K562 (cell line): ENCODE measurements at regions of chr3 and their contacts with region 1.

Region 1: DNA sequence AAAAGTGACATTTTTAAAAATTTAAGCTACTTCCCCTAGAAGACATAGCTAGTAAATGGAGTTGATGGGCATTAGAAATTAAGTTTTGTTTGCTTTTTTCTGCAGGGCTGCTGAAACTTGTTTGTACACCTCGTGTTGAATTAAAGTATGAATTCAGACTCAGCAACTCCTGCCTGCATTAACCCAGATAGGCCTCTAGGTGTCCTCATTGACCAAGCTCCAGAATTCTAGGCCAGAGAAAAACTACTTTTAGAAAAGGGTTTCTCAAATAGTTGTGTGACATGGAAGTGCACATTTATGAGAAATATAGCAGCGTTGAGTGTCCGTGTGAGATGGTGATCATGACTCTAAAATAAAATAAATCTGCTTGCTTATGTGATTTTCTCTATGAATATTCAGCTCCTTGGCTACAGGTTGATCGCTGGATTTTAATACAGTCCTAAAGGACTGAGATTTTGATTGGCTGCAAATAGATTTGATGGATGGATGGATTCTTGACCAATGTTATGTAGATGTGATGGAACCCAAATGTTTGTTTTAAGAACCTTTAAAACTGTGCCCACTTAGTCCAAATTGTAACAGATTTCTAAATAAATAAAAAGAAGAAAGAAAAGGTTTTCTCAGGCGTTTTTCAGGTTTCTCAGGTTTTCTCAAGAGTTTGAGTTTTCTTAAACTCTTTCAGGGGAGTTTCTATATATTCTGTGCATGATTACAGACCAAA is 39.4 kb upstream of the LMOD3 start:
- DNase-seq: peak; percentile 36 to 50 (median 42)
- ATAC-seq: peak; percentile 56
- H3K4me3 ChIP-seq: no peak overlapping the region
- H3K27ac ChIP-seq: no peak overlapping the region
- H3K4me1 ChIP-seq: no peaks in the 10 kb centered on the region
- H3K27me3 ChIP-seq: no peaks in the 10 kb centered on the region; a peak in 1 of 5 replicates
- CTCF ChIP-seq: peak; percentile 67 to 82 (median 71)
- EP300 ChIP-seq: no peak
- POLR2A ChIP-seq: no peak
- RAD21 ChIP-seq: peak; percentile 89 to 92

Region 2: DNA sequence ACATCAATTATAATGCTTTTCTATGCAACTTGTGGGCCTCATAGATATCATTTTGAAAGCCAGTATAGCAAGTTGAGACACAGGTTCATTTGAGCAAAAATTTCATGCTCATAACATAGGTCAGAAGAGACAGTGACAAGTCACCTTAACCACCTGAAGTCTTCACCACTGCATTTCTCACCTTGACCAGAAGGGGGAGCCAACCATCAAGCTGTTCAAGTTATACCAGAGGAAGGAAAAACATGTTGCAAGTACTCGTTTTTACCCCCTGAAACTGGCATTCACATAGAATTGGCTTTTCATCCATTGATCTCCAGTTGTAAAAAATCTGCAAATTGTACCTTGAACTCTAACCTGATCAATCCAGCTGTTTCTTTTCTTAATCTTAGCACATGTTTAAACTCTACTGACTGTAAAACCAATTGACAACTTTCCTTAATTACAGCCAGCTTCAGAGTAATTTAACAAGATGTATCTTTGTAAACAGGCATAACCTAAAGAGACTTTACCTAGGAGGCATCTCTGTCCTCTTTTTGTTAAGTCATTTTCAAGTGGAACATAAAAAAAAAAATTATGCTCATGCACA is 40.8 kb before region 1 on chr3:
- CTCF ChIA-PET with region 1: no interaction called
- POLR2A ChIA-PET with region 1: no interaction called
- in situ Hi-C with region 1: no loop called
- intact Hi-C with region 1: loop called (anchors 1 kb)
- DNase-seq: peak; percentile 37 to 80 (median 47)
- ATAC-seq: peak; percentile 81
- H3K4me3 ChIP-seq: no peak overlapping the region
- H3K27ac ChIP-seq: no peak overlapping the region
- H3K4me1 ChIP-seq: no peaks in the 10 kb centered on the region; a peak in 1 of 5 replicates
- H3K27me3 ChIP-seq: no peaks in the 10 kb centered on the region
- CTCF ChIP-seq: peak; percentile 61 to 77 (median 75)
- EP300 ChIP-seq: no peak
- POLR2A ChIP-seq: no peak
- RAD21 ChIP-seq: peak; percentile 72 to 82

Region 3: GRCh38 chr3:69306239-69307185 is 144.8 kb after region 1 on chr3:
- CTCF ChIA-PET with region 1: interaction called, 16 read pairs
- POLR2A ChIA-PET with region 1: interaction called, 3 read pairs
- in situ Hi-C with region 1: loop called (anchors 5 kb)
- intact Hi-C with region 1: loop called (anchors 1 kb)
- DNase-seq: peak; percentile 42 to 70 (median 67)
- ATAC-seq: peak; percentile 97
- H3K4me3 ChIP-seq: no peak overlapping the region
- H3K27ac ChIP-seq: no peak overlapping the region
- H3K4me1 ChIP-seq: no peaks in the 10 kb centered on the region
- H3K27me3 ChIP-seq: peaks cover 3 to 5% of the 10 kb centered on the region in 2 experiments; a peak in 2 of 5 replicates
- CTCF ChIP-seq: peak; percentile 70 to 81 (median 78)
- EP300 ChIP-seq: no peak
- POLR2A ChIP-seq: no peak
- RAD21 ChIP-seq: peak; percentile 83 to 85

Region 4: DNA sequence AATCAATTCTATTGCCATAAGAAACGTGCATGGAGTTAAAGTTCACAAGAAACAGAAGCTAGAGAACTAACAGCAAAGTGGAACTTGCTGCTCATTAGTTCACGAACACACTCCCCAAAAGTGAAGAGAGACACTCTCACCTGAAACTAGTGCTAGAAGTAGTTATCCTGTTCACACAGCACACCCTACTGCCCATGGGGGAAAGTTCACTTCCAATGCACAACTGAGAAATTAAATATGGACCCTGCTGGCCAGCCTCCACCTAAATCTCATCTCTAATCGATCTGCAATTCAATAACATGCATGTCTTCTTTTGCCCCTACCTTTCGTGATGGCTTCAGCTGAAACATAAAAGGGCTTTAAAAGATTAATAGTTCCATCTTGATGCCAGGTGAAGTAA is 263.5 kb after region 1 on chr3:
- CTCF ChIA-PET with region 1: no interaction called
- POLR2A ChIA-PET with region 1: no interaction called
- in situ Hi-C with region 1: loop called (anchors 10 kb)
- intact Hi-C with region 1: loop called (anchors 5 kb)
- DNase-seq: peak in 3 of 4 experiments; percentile 4 to 18 (median 13)
- ATAC-seq: peak; percentile 76
- H3K4me3 ChIP-seq: no peak overlapping the region
- H3K27ac ChIP-seq: no peak overlapping the region
- H3K4me1 ChIP-seq: no peaks in the 10 kb centered on the region
- H3K27me3 ChIP-seq: peaks cover 0 to 5% of the 10 kb centered on the region in 2 experiments; a peak in 2 of 5 replicates
- CTCF ChIP-seq: peak; percentile 43 to 58 (median 55); a peak in 5 of 6 replicates
- EP300 ChIP-seq: no peak
- POLR2A ChIP-seq: no peak
- RAD21 ChIP-seq: peak; percentile 27 to 60; a peak in 3 of 4 replicates

Region 5: GRCh38 chr3:69671082-69671952 is 509.6 kb after region 1 on chr3:
- CTCF ChIA-PET with region 1: no interaction called
- POLR2A ChIA-PET with region 1: no interaction called
- in situ Hi-C with region 1: loop called (anchors 25 kb)
- intact Hi-C with region 1: loop called (anchors 1 kb)
- DNase-seq: peak; percentile 22 to 50 (median 35)
- ATAC-seq: peak; percentile 56; the same call in 2 of the 3 replicates
- H3K4me3 ChIP-seq: no peak overlapping the region
- H3K27ac ChIP-seq: no peak overlapping the region
- H3K4me1 ChIP-seq: no peaks in the 10 kb centered on the region; a peak in 1 of 5 replicates
- H3K27me3 ChIP-seq: no peaks in the 10 kb centered on the region
- CTCF ChIP-seq: peak; percentile 29 to 77 (median 50); a peak in 5 of 6 replicates
- EP300 ChIP-seq: no peak
- POLR2A ChIP-seq: no peak
- RAD21 ChIP-seq: peak; percentile 73 to 75

Region 6: GRCh38 chr3:69724722-69725435 is 563.1 kb after region 1 on chr3:
- CTCF ChIA-PET with region 1: no interaction called
- POLR2A ChIA-PET with region 1: no interaction called
- in situ Hi-C with region 1: no loop called
- intact Hi-C with region 1: no loop called
- DNase-seq: peak; percentile 80 to 94 (median 84)
- ATAC-seq: peak; percentile 89
- H3K4me3 ChIP-seq: no peak overlapping the region
- H3K27ac ChIP-seq: peak overlapping the region; percentile 90
- H3K4me1 ChIP-seq: peaks cover 16 to 38% of the 10 kb centered on the region in 2 experiments
- H3K27me3 ChIP-seq: no peaks in the 10 kb centered on the region
- CTCF ChIP-seq: no peak
- EP300 ChIP-seq: peak; percentile 97
- POLR2A ChIP-seq: no peak
- RAD21 ChIP-seq: no peak

Region 7: DNA sequence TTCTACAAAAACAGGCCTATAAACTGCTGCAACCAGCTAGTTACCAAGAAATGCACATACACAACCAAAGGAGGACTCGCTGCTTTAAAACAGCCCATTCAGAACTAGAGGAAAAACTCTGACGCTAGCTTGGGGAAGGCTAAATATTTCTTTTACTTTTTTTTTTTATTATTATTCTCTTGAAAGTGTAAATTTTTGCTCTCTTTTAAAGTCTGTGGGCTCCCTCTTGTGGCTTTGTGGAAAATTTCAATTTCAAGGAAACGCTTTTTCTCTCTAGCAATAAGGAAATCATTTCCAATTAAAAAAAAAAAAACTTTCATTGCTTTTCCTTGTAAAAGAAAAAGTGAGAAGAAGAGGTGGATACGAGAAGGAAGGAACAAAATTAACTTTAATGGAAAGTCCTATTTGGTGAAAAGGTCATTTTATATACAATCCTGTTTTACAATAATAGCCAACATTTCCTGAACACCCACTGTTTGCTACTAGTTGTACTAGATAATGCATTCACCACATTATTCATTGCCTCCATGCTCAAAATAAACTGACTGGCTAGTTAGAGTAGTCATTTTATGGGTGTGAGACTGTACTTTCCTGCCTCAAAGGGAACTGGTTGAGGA is 786.6 kb after region 1 on chr3:
- CTCF ChIA-PET with region 1: interaction called, 3 read pairs
- POLR2A ChIA-PET with region 1: no interaction called
- in situ Hi-C with region 1: loop called (anchors 25 kb)
- intact Hi-C with region 1: no loop called
- DNase-seq: peak; percentile 7 to 38 (median 10)
- ATAC-seq: no peak
- H3K4me3 ChIP-seq: no peak overlapping the region
- H3K27ac ChIP-seq: no peak overlapping the region
- H3K4me1 ChIP-seq: no peaks in the 10 kb centered on the region
- H3K27me3 ChIP-seq: no peaks in the 10 kb centered on the region
- CTCF ChIP-seq: peak in 2 of 3 experiments; percentile 27 to 64; a peak in 3 of 6 replicates
- EP300 ChIP-seq: no peak
- POLR2A ChIP-seq: no peak
- RAD21 ChIP-seq: peak; percentile 49 to 55